Activated CD4-positive, alpha-beta memory T cell treated with anti-CD3 and anti-CD28 coated beads for 36 hours (primary cell): ENCODE measurements at regions of chr11 and their contacts with region 1.

Region 1: GRCh38 chr11:86193297-86194095 is 51.1 kb upstream of the EED start:
- DNase-seq: peak; percentile 72
- H3K4me3 Mint-ChIP-seq: peak overlapping the region; percentile 60
- H3K27ac Mint-ChIP-seq: peak overlapping the region; percentile 64
- H3K4me1 Mint-ChIP-seq: peaks cover 33% of the 10 kb centered on the region
- H3K27me3 Mint-ChIP-seq: peaks cover 6% of the 10 kb centered on the region

Region 2: GRCh38 chr11:86021377-86021776 is 172.1 kb before region 1 on chr11:
- CTCF ChIA-PET with region 1: interaction called, 6 read pairs
- POLR2A ChIA-PET with region 1: no interaction called
- intact Hi-C with region 1: loop called (anchors 1 kb)
- DNase-seq: no peak
- H3K4me3 Mint-ChIP-seq: no peak overlapping the region
- H3K27ac Mint-ChIP-seq: peak overlapping the region; percentile 33
- H3K4me1 Mint-ChIP-seq: peaks cover 46% of the 10 kb centered on the region
- H3K27me3 Mint-ChIP-seq: no peaks in the 10 kb centered on the region

Region 3: GRCh38 chr11:86041975-86042378 is 151.5 kb before region 1 on chr11:
- CTCF ChIA-PET with region 1: interaction called, 79 read pairs
- POLR2A ChIA-PET with region 1: interaction called, 5 read pairs
- intact Hi-C with region 1: loop called (anchors 1 kb)
- DNase-seq: peak; percentile 48
- H3K4me3 Mint-ChIP-seq: no peak overlapping the region
- H3K27ac Mint-ChIP-seq: peak overlapping the region; percentile 58
- H3K4me1 Mint-ChIP-seq: peaks cover 71% of the 10 kb centered on the region
- H3K27me3 Mint-ChIP-seq: no peaks in the 10 kb centered on the region

Region 4: DNA sequence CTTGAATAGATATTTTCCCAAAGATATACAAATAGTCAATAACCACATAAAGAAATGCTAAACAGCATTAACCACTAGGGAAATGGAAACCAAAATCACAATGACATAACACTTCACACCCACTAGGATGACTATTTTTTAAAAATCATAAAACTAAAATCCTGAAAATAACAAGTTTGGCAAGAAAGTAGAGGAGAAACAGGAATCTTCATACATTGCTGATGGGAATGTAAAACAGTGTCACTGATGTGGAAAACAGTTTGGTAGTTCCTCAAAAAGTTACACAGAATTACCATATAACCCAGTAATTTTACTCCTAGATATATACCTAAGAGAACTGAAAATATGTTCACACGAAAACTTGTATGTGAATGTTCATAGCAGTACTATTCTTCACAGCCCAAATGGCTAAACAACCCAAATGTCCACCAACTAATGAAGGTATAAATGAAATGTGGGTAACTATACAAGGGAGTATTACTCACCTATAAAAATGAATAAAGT is 137.1 kb before region 1 on chr11:
- CTCF ChIA-PET with region 1: interaction called, 17 read pairs
- POLR2A ChIA-PET with region 1: interaction called, 3 read pairs
- intact Hi-C with region 1: no loop called
- DNase-seq: no peak
- H3K4me3 Mint-ChIP-seq: no peak overlapping the region
- H3K27ac Mint-ChIP-seq: peak overlapping the region; percentile 20
- H3K4me1 Mint-ChIP-seq: peaks cover 92% of the 10 kb centered on the region
- H3K27me3 Mint-ChIP-seq: no peaks in the 10 kb centered on the region

Region 5: DNA sequence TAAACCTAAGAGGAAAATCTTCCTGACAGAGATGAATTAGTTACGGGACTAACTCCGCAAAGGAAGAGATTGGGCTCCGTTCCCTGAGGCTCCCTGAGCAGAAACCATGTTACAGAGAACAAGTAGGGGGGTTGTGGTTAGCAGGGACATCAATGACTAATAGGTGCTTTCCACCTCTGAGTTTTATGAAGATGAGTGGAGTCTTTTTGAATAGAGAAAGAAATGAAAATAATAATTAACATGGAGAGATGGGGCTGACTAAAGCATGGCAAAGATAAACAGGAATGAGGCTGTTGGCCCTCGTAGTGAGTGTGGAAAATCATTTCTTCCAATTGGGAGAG is 77.1 kb before region 1 on chr11:
- CTCF ChIA-PET with region 1: interaction called, 15 read pairs
- POLR2A ChIA-PET with region 1: interaction called, 5 read pairs
- intact Hi-C with region 1: loop called (anchors 5 kb)
- DNase-seq: peak; percentile 59
- H3K4me3 Mint-ChIP-seq: peak overlapping the region; percentile 40
- H3K27ac Mint-ChIP-seq: peak overlapping the region; percentile 44
- H3K4me1 Mint-ChIP-seq: peaks cover 34% of the 10 kb centered on the region
- H3K27me3 Mint-ChIP-seq: peaks cover 2% of the 10 kb centered on the region

Region 6: GRCh38 chr11:86174101-86175046 is 19.1 kb before region 1 on chr11:
- CTCF ChIA-PET with region 1: interaction called, 23 read pairs
- POLR2A ChIA-PET with region 1: interaction called, 5 read pairs
- intact Hi-C with region 1: loop called (anchors 1 kb)
- DNase-seq: peak; percentile 36
- H3K4me3 Mint-ChIP-seq: no peak overlapping the region
- H3K27ac Mint-ChIP-seq: no peak overlapping the region
- H3K4me1 Mint-ChIP-seq: peaks cover 28% of the 10 kb centered on the region
- H3K27me3 Mint-ChIP-seq: no peaks in the 10 kb centered on the region

Region 7: GRCh38 chr11:86244522-86245368 is 51.2 kb after region 1 on chr11 and contains the start of gene EED:
- CTCF ChIA-PET with region 1: interaction called, 11 read pairs
- POLR2A ChIA-PET with region 1: interaction called, 4 read pairs
- intact Hi-C with region 1: no loop called
- DNase-seq: peak; percentile 96
- H3K4me3 Mint-ChIP-seq: no peak within 1 kb of the TSS
- H3K27ac Mint-ChIP-seq: no peak within 1 kb of the TSS
- H3K4me1 Mint-ChIP-seq: peaks cover 33% of the 10 kb centered on the region
- H3K27me3 Mint-ChIP-seq: no peaks in the 10 kb centered on the region
- total RNA-seq, gene EED: 170 TPM

Region 8: DNA sequence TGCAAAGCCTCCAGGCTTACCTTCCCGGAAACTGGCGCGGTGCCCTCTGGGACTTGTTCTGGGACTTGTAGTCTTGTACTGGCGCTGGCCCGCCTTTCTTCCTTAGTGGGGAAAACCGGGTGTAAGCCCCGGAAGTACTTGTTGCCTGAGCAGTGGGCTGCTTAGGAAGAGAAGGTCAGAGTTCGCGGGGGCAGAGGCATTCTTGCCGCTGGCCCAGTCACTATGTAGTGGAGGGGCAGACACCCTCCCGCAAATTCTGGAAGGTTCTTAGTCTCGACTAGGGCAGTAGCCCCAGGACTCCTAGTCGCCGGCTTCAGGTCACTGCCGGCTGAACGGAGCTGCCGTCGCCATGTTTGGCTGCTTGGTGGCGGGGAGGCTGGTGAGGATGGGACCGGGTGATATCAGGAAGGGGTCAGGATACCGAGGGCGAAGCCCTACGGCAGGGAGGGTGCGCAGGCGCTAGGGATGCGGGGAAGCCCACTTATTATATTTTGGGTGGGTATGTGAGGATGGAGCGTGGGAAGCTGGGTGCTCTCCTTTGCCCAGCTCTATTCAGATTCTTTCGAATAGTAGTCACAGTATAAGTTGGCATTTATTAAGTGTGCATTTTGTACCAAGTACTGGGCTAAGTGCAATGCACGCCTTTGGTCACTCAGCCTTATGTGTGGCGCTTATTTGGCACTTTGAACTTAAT is 108.8 kb after region 1 on chr11 and contains the start of gene HIKESHI:
- CTCF ChIA-PET with region 1: no interaction called
- POLR2A ChIA-PET with region 1: no interaction called
- intact Hi-C with region 1: no loop called
- DNase-seq: peak; percentile 95
- H3K4me3 Mint-ChIP-seq: peak within 1 kb of the TSS; percentile 100
- H3K27ac Mint-ChIP-seq: peak within 1 kb of the TSS; percentile 93
- H3K4me1 Mint-ChIP-seq: peaks cover 23% of the 10 kb centered on the region
- H3K27me3 Mint-ChIP-seq: no peaks in the 10 kb centered on the region
- total RNA-seq, gene HIKESHI: 53.1 to 55.1 TPM